Ovary (tissue), 10 donors: ENCODE measurements at regions of chr3 and their contacts with region 1.

Region 1: DNA sequence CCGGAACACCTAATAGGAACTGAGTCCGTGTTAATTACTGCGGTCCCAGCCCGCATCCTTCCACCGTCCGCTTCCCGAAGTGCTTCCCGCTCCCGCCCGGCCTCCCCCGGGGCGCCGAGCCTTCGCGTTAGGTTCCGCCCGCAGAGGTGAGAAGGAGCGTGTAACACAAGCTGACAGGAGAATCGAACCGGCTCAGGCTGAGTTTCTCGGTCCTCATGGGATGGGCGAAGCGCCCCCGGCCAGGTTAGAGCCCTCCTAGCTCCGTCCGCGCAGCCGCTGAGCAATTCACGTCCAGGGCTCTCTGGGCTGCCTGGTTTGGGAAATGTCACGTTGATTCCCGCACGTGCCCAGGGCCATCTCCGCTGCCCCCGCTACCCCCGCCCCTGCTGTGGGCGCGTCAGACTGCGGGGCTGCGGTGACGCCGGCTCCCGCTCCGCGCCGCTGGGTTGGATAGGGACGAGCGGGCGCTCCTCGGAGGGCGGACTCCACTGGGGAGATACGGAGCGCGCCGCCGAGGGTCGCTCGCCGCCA is 954 bp downstream of the CLDN11 start:
- DNase-seq: peak; percentile 65 to 78 (median 69)
- H3K4me3 ChIP-seq: peak overlapping the region; percentile 53
- H3K27ac ChIP-seq: peak overlapping the region; percentile 77 to 91
- H3K4me1 ChIP-seq: peaks cover 15% of the 10 kb centered on the region
- H3K27me3 ChIP-seq: no peaks in the 10 kb centered on the region
- CTCF ChIP-seq: no peak
- EP300 ChIP-seq: no peak
- POLR2A ChIP-seq: peak; percentile 50

Region 2: GRCh38 chr3:170469151-170470062 is 49.8 kb after region 1 on chr3:
- intact Hi-C with region 1: loop called in 1 of 4 experiments (anchors 10 kb)
- DNase-seq: peak in 2 of 5 donors; percentile 33 to 65
- H3K4me3 ChIP-seq: no peak overlapping the region
- H3K27ac ChIP-seq: peak overlapping the region in 1 of 2 donors; percentile 63
- H3K4me1 ChIP-seq: peaks cover 32% of the 10 kb centered on the region
- H3K27me3 ChIP-seq: no peaks in the 10 kb centered on the region
- CTCF ChIP-seq: no peak
- EP300 ChIP-seq: no peak
- POLR2A ChIP-seq: no peak

Region 3: GRCh38 chr3:170493712-170494182 is 74.1 kb after region 1 on chr3:
- intact Hi-C with region 1: loop called in 3 of 4 experiments (anchors 5 kb)
- DNase-seq: peak in 1 of 5 donors; percentile 60
- H3K4me3 ChIP-seq: no peak overlapping the region
- H3K27ac ChIP-seq: peak overlapping the region in 1 of 2 donors; percentile 73
- H3K4me1 ChIP-seq: peaks cover 42% of the 10 kb centered on the region
- H3K27me3 ChIP-seq: no peaks in the 10 kb centered on the region
- CTCF ChIP-seq: no peak
- EP300 ChIP-seq: no peak
- POLR2A ChIP-seq: no peak